Transverse colon (tissue), 4 donors: ENCODE measurements at regions of chr12 and their contacts with region 1.

Region 1: DNA sequence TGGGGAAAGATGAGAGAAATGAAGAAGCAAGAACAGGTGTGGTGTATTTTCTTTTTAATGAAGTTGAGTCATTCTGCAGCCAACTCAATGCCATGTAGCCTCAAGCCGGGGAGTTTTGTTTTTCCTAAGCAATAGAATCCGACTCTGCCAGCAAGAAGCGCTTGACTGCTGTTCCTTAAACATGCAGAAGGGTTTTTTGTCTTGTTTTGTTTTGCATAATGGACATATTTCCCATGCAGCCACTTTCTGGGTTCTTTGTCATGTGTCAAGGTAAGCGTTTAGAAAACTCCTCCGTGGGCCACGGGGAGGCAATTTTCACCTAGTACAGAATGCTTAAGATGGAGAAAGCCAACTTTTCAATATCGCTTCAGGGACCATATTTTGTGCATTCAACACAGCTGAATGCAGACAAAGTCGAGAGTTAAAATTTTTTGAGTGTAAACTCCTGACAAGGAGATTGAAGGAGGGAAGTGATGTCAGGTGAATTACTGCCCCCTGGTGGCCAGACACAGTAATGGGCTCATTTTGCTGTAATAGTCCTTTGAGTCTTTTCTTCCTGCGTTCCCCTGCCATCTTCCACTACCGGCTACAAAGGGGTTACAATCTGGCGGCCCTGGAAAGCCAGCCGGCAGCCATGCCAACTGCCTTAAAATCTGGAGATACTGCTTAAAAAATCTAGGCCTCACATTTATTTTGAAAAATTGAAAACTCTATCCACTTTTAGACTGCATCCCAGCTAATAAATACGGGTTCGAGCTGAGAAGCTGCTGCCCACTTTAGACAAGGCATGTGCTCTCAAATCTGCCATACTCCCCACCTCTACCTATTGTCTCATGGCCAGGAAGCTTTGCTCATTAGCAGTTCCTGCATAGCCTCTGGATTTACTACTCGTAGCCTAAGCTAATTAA is 3.2 kb upstream of the FICD start:
- DNase-seq: peak; percentile 75
- H3K4me3 ChIP-seq: no peak overlapping the region
- H3K27ac ChIP-seq: no peak overlapping the region
- H3K4me1 ChIP-seq: peaks cover 5 to 20% (median 8%) of the 10 kb centered on the region in 4 donors
- H3K27me3 ChIP-seq: no peaks in the 10 kb centered on the region
- CTCF ChIP-seq: peak; percentile 85 to 97 (median 93)
- EP300 ChIP-seq: no peak
- POLR2A ChIP-seq: no peak

Region 2: GRCh38 chr12:107983756-107984472 is 528.0 kb before region 1 on chr12:
- in situ Hi-C with region 1: no loop called
- intact Hi-C with region 1: loop called (anchors 2 kb)
- DNase-seq: no peak
- H3K4me3 ChIP-seq: no peak overlapping the region
- H3K27ac ChIP-seq: no peak overlapping the region
- H3K4me1 ChIP-seq: no peaks in the 10 kb centered on the region
- H3K27me3 ChIP-seq: no peaks in the 10 kb centered on the region
- CTCF ChIP-seq: no peak
- EP300 ChIP-seq: no peak
- POLR2A ChIP-seq: no peak

Region 3: GRCh38 chr12:108609537-108610335 is 97.8 kb after region 1 on chr12:
- in situ Hi-C with region 1: no loop called
- intact Hi-C with region 1: no loop called
- DNase-seq: peak; percentile 67
- H3K4me3 ChIP-seq: no peak overlapping the region
- H3K27ac ChIP-seq: peak overlapping the region in 3 of 4 donors; percentile 36 to 42 (median 38)
- H3K4me1 ChIP-seq: peaks cover 0 to 4% (median 0%) of the 10 kb centered on the region in 4 donors
- H3K27me3 ChIP-seq: no peaks in the 10 kb centered on the region
- CTCF ChIP-seq: no peak
- EP300 ChIP-seq: no peak
- POLR2A ChIP-seq: no peak